ENCODE measurements at regions of chr7 and their contacts with region 1.

Region 1: GRCh38 chr7:66654123-66654732 is 25.5 kb downstream of the KCTD7 start:
- DNase-seq: peak; percentile 98 to 99 (median 99)
- H3K4me3 ChIP-seq: peak overlapping the region; percentile 66 to 90 (median 86)
- H3K4me3 Mint-ChIP-seq: peak overlapping the region; percentile 90 to 95
- H3K27ac ChIP-seq: peak overlapping the region; percentile 98 to 99
- H3K27ac Mint-ChIP-seq: peak overlapping the region; percentile 97 to 100 (median 98)
- H3K4me1 ChIP-seq: peaks cover 14 to 25% of the 10 kb centered on the region in 2 donors
- H3K4me1 Mint-ChIP-seq: peaks cover 20% of the 10 kb centered on the region
- H3K27me3 ChIP-seq: peaks cover 0 to 2% of the 10 kb centered on the region in 2 donors
- H3K27me3 Mint-ChIP-seq: peaks cover 0 to 8% (median 7%) of the 10 kb centered on the region in 3 donors
- CTCF ChIP-seq: no peak

Region 2: GRCh38 chr7:66330961-66331360 is 323.3 kb before region 1 on chr7:
- intact Hi-C with region 1: no loop called
- DNase-seq: no peak
- H3K4me3 ChIP-seq: no peak overlapping the region
- H3K4me3 Mint-ChIP-seq: no peak overlapping the region
- H3K27ac ChIP-seq: no peak overlapping the region
- H3K27ac Mint-ChIP-seq: peak overlapping the region in 1 of 7 donors; percentile 16
- H3K4me1 ChIP-seq: peaks cover 0 to 9% of the 10 kb centered on the region in 2 donors
- H3K4me1 Mint-ChIP-seq: peaks cover 17% of the 10 kb centered on the region
- H3K27me3 ChIP-seq: no peaks in the 10 kb centered on the region
- H3K27me3 Mint-ChIP-seq: peaks cover 0 to 2% (median 2%) of the 10 kb centered on the region in 3 donors
- CTCF ChIP-seq: no peak

Region 3: GRCh38 chr7:66529883-66530610 is 124.2 kb before region 1 on chr7:
- intact Hi-C with region 1: no loop called
- DNase-seq: no peak
- H3K4me3 ChIP-seq: no peak overlapping the region
- H3K4me3 Mint-ChIP-seq: no peak overlapping the region
- H3K27ac ChIP-seq: no peak overlapping the region
- H3K27ac Mint-ChIP-seq: peak overlapping the region in 3 of 7 donors; percentile 14 to 68 (median 60)
- H3K4me1 ChIP-seq: no peaks in the 10 kb centered on the region
- H3K4me1 Mint-ChIP-seq: peaks cover 6% of the 10 kb centered on the region
- H3K27me3 ChIP-seq: no peaks in the 10 kb centered on the region
- H3K27me3 Mint-ChIP-seq: no peaks in the 10 kb centered on the region
- CTCF ChIP-seq: no peak

Region 4: GRCh38 chr7:66591799-66592596 is 62.2 kb before region 1 on chr7:
- intact Hi-C with region 1: loop called (anchors 10 kb)
- DNase-seq: peak; percentile 66 to 82 (median 80)
- H3K4me3 ChIP-seq: peak overlapping the region; percentile 85 to 91 (median 86)
- H3K4me3 Mint-ChIP-seq: peak overlapping the region; percentile 93 to 96
- H3K27ac ChIP-seq: peak overlapping the region; percentile 80 to 90
- H3K27ac Mint-ChIP-seq: peak overlapping the region; percentile 92 to 98 (median 95)
- H3K4me1 ChIP-seq: peaks cover 16 to 20% of the 10 kb centered on the region in 2 donors
- H3K4me1 Mint-ChIP-seq: peaks cover 35% of the 10 kb centered on the region
- H3K27me3 ChIP-seq: no peaks in the 10 kb centered on the region
- H3K27me3 Mint-ChIP-seq: peaks cover 2 to 7% (median 2%) of the 10 kb centered on the region in 3 donors
- CTCF ChIP-seq: no peak